PC-9 (cell line): ENCODE measurements at regions of chr7 and their contacts with region 1.

Region 1: GRCh38 chr7:143892527-143893300 is 9.3 kb downstream of the TCAF1 start:
- DNase-seq: peak in 1 of 2 experiments; percentile 53
- H3K4me3 ChIP-seq: no peak overlapping the region
- H3K27ac ChIP-seq: no peak overlapping the region
- H3K4me1 ChIP-seq: no peaks in the 10 kb centered on the region
- H3K27me3 ChIP-seq: no peaks in the 10 kb centered on the region
- CTCF ChIP-seq: peak; percentile 76

Region 2: DNA sequence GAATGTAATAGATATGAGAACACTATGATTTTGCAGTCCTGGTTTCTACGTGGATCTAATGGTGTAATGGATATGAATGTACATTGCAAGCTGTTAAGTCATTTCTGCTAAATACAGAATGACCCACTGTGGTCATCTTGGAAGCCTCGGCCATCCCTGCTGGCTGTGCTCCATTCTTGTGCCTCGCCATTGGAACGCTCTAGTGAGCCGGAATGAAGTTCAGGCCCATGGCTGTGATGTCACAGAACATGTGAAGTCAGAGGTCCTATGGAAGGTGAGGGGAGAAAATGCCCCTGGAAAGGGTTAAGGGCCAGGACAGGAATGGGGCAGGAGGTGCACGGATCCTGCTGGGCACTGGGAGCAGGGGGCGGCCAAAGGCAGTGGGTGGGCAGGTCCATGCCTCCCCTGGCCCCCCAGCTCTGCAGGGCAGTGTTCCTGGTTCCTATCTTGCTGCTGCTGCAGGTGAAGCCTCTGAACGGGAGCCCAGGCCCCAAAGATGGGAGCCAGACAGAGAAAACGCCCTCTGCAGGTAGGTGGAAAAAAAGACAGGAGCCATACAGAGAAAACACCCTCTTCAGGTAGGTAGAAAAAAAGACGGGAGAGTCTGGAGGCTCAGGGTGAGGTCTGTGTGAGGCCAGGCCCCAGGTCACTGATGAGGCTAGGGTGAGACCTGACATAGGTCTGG is 953.3 kb before region 1 on chr7 and contains the start of gene LLCFC1:
- CTCF ChIA-PET with region 1: no interaction called
- POLR2A ChIA-PET with region 1: no interaction called
- intact Hi-C with region 1: no loop called
- DNase-seq: peak; percentile 44 to 54
- H3K4me3 ChIP-seq: no peak within 1 kb of the TSS
- H3K27ac ChIP-seq: no peak within 1 kb of the TSS
- H3K4me1 ChIP-seq: no peaks in the 10 kb centered on the region
- H3K27me3 ChIP-seq: no peaks in the 10 kb centered on the region
- CTCF ChIP-seq: peak; percentile 70
- total RNA-seq, gene LLCFC1: not detected in 2 replicates

Region 3: DNA sequence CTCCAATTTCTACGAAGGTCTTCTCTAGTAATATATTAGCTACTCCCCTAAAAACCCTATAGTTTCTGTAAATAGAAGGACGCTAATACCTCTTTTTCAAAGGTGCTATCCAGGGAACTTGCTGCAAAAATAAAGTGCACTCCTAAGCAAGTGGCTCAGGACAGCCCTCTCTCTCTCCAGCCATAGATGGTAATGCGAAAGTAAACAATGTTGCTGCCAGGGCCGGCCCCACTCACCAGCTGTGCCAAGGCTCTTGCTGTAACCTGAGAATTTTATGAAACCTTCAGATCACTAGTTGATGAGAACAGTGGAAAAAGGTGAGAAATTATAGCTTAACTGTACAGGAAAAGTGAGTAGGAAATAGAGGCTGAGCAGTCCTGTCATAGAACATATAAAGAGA is 720.4 kb before region 1 on chr7:
- CTCF ChIA-PET with region 1: no interaction called
- POLR2A ChIA-PET with region 1: interaction called, 11 read pairs
- intact Hi-C with region 1: no loop called
- DNase-seq: peak; percentile 63 to 65
- H3K4me3 ChIP-seq: peak overlapping the region; percentile 9; the same call in 1 of the 2 replicates
- H3K27ac ChIP-seq: peak overlapping the region; percentile 42
- H3K4me1 ChIP-seq: peaks cover 16% of the 10 kb centered on the region
- H3K27me3 ChIP-seq: no peaks in the 10 kb centered on the region
- CTCF ChIP-seq: no peak

Region 4: GRCh38 chr7:143248761-143249354 is 643.9 kb before region 1 on chr7:
- CTCF ChIA-PET with region 1: interaction called, 12 read pairs
- POLR2A ChIA-PET with region 1: no interaction called
- intact Hi-C with region 1: no loop called
- DNase-seq: peak; percentile 91 to 100
- H3K4me3 ChIP-seq: peak overlapping the region; percentile 32; the same call in 1 of the 2 replicates
- H3K27ac ChIP-seq: peak overlapping the region; percentile 95
- H3K4me1 ChIP-seq: peaks cover 76% of the 10 kb centered on the region
- H3K27me3 ChIP-seq: no peaks in the 10 kb centered on the region
- CTCF ChIP-seq: no peak

Region 5: DNA sequence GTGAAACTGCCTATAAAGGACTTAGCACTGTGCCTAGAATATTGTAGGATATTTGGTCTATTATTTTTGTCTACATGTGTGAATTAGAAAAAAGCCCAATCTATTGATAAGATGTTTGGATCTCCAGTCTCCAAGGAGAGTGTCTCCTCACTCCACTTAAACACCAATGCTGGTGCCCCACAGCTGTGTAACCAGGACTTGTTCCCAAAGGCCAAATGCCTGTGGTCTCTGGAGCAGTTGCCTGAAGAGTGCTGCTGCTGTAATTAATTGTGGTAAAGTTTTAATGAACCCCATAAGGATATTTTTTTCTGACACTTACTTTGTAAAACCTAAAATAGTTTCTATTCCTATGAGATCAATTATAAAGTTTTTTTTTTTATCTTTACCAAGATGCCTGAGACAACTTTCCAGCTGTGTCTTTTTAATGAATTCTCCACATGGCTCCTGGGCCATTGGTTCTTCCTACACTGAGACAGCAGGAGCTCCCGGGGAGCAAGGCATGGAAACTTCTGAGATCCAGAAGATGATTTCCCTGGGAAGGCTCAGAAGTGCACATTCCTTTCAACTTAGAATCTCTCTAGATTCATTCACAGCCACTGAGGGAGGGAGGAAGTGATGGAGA is 144.8 kb after region 1 on chr7:
- CTCF ChIA-PET with region 1: no interaction called
- POLR2A ChIA-PET with region 1: no interaction called
- intact Hi-C with region 1: no loop called
- DNase-seq: no peak
- H3K4me3 ChIP-seq: no peak overlapping the region
- H3K27ac ChIP-seq: no peak overlapping the region
- H3K4me1 ChIP-seq: no peaks in the 10 kb centered on the region
- H3K27me3 ChIP-seq: no peaks in the 10 kb centered on the region
- CTCF ChIP-seq: no peak